ENCODE measurements at regions of chr20 and their contacts with region 1.

Region 1: DNA sequence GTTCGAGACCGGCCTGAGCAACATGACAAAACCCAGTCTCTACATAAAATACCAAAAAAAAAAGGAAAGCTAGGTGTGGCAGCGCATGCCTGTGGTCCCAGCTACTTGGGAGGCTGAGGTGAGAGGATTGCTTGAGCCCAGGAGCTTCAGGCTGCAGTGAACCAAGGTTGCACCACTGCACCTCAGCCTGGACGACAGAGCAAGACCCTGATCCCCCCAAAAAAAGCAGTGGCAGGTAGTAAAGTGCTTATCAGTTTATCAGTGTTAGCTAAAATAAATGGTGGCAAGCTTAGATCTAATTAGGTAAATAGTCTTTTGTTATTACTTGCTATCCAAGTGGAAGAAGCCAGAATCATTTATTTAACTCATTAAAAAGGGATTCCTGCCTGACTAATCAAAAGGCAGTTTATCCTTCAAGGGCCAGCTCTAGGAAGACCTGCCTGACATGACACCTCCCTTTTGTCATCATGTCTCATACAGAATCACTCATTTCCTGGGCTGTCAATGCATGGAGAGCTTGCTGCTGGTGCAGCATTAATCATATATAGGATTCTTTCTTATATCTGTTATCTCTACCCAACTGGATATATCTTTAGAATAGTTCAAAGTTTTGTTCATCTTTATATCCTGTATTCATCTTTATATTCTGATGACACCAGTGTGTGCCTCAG is 9.6 kb downstream of the DSTN start:
- DNase-seq: peak; percentile 28
- H3K4me3 Mint-ChIP-seq: no peak overlapping the region
- H3K27ac Mint-ChIP-seq: peak overlapping the region; percentile 64
- H3K4me1 Mint-ChIP-seq: peaks cover 27% of the 10 kb centered on the region
- H3K27me3 Mint-ChIP-seq: no peaks in the 10 kb centered on the region
- CTCF ChIP-seq: no peak

Region 2: GRCh38 chr20:17536944-17537444 is 42.5 kb before region 1 on chr20:
- CTCF ChIA-PET with region 1: interaction called, 75 read pairs
- POLR2A ChIA-PET with region 1: interaction called, 348 read pairs
- intact Hi-C with region 1: no loop called
- DNase-seq: peak; percentile 83
- H3K4me3 Mint-ChIP-seq: no peak overlapping the region
- H3K27ac Mint-ChIP-seq: no peak overlapping the region
- H3K4me1 Mint-ChIP-seq: peaks cover 20% of the 10 kb centered on the region
- H3K27me3 Mint-ChIP-seq: no peaks in the 10 kb centered on the region
- CTCF ChIP-seq: peak; percentile 84

Region 3: DNA sequence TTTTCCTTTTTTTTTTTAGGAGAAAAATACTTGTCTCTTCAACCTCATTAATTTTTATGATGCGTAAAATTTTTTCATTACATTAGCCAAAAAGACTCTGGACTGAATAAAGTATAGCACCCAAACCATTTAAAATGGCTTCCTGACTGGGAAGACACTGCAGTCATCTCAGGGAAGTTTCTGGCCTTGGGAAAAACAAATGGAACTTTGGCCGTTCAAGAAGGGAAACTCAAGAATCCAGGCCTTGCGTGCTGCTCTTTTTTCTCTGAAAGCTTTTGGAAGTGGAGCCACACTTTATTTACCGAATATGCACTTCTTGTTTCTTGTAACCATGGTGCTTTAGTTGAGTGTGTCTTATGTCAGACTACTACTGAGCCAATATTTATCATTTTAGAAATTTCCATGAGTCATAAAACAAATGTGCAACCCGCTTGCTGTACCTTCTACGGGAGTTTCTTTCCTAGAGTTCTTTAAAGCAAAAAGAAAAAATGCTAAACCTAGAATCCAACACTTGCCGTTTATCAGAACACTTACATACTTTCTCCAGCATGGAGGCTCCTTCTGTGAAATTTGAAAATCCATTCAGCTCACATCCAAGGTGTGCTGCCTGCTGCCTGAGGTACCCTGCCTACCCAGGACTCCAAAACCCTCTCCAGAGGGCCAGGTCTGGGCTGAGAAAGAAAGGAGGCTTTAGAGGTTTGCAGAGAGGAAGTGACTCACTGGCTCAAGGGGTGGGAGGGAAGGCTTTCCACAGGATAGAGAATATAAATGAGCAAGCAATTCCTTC is 21.2 kb before region 1 on chr20:
- CTCF ChIA-PET with region 1: interaction called, 72 read pairs
- POLR2A ChIA-PET with region 1: interaction called, 340 read pairs
- intact Hi-C with region 1: no loop called
- DNase-seq: peak; percentile 89
- H3K4me3 Mint-ChIP-seq: peak overlapping the region; percentile 64
- H3K27ac Mint-ChIP-seq: peak overlapping the region; percentile 97
- H3K4me1 Mint-ChIP-seq: peaks cover 36% of the 10 kb centered on the region
- H3K27me3 Mint-ChIP-seq: no peaks in the 10 kb centered on the region
- CTCF ChIP-seq: no peak

Region 4: GRCh38 chr20:17594443-17594842 is 14.9 kb after region 1 on chr20:
- CTCF ChIA-PET with region 1: interaction called, 15 read pairs
- POLR2A ChIA-PET with region 1: interaction called, 10 read pairs
- intact Hi-C with region 1: no loop called
- DNase-seq: no peak
- H3K4me3 Mint-ChIP-seq: no peak overlapping the region
- H3K27ac Mint-ChIP-seq: no peak overlapping the region
- H3K4me1 Mint-ChIP-seq: peaks cover 49% of the 10 kb centered on the region
- H3K27me3 Mint-ChIP-seq: no peaks in the 10 kb centered on the region
- CTCF ChIP-seq: no peak

Measured in MCF 10A (cell line).